Posterior vena cava (tissue), 2 donors: ENCODE measurements at regions of chr11 and their contacts with region 1.

Region 1: GRCh38 chr11:129331871-129332274 is 43.8 kb upstream of the BARX2 start:
- DNase-seq: peak; percentile 93

Region 2: GRCh38 chr11:129117595-129118350 is 214.1 kb before region 1 on chr11:
- intact Hi-C with region 1: loop called (anchors 5 kb)
- DNase-seq: no peak

Region 3: GRCh38 chr11:129259931-129260348 is 71.9 kb before region 1 on chr11:
- intact Hi-C with region 1: no loop called
- DNase-seq: no peak